Dorsolateral prefrontal cortex (tissue), 120 donors: ENCODE measurements at regions of chr14 and their contacts with region 1.

Region 1: DNA sequence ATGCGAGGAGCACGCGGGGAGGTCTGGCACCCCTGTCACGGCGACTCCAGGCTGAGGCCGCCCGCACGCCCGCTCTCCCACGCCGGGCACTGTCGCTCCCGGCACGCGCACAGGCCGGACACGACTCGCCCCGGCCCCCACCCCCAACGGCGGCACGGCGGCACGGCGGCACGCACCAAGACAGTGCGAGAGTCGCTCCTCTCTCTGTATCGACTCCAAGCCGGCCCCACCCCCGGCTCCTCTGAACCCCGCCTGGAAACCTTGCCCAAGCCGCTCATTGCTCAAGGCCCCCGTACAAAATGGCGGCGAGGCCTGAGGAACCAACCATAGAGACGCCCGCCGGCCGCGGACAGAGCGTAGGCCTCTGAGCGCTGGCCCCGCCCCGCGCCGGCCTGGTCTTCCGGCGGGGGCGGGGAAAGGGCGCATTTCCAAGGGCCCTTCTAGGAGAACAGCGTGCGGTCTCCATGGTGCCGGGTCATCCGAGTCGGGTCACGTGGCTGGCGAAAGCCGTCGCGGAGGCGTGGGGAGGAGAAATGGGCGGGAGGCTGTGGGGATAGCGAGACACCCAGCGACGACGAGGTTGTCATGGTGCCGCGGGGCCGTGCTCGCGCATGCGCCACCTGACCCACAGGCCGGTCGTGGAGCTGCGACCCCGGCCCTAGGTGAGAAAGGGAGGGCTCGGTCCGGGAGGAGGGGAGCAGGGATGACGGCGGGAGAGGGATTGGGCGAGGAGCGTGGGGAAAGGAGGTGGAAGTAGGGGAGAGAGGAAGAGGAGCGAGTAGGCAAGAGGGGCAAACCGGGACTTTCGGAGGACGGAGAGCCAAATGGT is at the start of gene CIPC:
- DNase-seq: peak; percentile 100
- H3K4me3 ChIP-seq: peak within 1 kb of the TSS; percentile 64 to 96 (median 85)
- H3K27ac ChIP-seq: peak within 1 kb of the TSS; percentile 93 to 100 (median 98)
- H3K27me3 ChIP-seq: no peaks in the 10 kb centered on the region
- CTCF ChIP-seq: peak in 37 of 56 donors; percentile 3 to 56 (median 24)
- total RNA-seq, gene CIPC: 63.6 to 149 (median 93.0) TPM

Region 2: DNA sequence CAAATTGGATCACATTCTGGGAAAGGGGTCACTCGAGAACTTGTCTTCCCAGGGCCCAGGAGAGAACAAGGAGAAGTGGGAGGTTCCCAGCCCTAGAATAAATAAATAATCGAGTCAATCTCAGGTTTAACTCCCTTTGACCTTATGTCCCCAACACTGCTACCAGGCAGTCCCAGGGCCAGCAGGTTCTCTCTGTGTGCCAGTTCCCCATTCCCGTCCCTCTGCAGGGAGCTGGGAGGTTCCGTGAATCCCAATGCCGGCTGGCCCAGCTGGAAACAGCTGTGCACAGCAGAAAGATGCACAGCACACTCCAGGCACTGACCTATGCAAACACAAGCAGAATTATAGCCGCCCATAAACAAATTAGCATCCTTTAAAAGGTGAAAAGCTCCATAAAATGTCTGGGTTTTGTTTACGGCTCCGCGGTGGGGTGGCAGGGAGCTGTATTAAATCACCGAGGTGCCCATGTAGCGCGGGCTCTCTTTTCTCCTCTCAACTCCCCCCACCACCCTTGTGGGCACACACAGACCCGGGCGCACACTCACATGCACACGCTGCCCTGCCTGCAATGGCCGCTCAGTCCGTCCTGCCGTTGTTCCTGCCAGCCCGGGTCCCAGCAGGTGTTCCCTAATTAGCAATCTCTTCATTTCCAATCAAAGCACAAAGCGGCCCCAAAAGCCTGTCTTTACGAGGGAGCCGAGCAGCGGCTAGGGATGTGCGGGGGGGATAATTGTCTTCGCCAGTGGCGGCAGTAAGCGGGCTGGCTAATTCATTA is 768.6 kb before region 1 on chr14:
- intact Hi-C with region 1: no loop called
- DNase-seq: peak in 1 of 10 donors; percentile 35
- H3K4me3 ChIP-seq: peak overlapping the region in 47 of 59 donors; percentile 3 to 56 (median 31)
- H3K27ac ChIP-seq: no peak overlapping the region
- H3K27me3 ChIP-seq: peaks cover 0 to 19% (median 5%) of the 10 kb centered on the region in 45 donors
- CTCF ChIP-seq: no peak

Region 3: DNA sequence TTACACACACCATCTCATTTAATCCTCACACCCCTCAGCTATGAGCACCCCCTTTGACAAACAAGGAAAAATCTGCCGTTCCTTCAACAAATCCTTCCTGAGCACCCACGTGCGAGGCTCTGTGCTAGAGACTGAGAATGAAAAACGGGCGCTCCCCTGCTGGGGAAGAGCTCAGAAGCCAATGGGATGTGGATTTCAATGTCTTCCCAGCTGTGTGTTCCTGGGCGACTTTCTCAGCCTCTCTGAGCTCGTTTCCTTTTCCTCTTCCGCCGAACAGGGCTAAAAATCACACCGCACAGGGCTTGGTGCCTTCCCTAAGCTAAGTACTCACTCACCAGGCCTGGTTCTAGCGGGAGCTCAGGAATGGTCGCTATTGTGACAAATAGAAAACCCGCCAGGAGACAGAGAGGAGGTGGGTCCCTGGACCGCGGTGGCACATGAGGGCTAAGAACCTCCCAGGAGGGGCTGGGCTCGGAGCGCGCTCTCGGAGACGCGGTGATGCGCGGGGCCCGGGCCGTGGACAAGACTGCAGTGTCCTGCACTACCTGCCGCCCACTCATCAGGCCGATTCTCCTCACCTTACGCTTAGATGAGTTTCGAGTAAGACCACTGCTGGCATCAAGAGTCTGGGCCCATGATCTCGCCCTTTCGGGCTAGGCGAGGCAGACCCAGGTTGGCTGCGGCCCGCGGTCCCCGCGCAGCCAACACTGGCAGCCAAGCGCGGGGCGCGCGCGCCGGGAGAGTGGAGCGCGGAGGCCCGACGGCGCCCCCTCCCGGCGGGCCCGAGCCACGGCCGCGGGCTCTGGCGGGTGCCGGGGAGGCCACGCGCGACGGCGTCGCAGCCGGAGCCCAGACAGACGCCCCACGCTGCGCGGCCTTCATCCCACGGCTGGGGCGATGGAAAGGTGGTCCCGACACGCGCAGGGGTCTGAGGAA is 26.7 kb after region 1 on chr14:
- intact Hi-C with region 1: loop called (anchors 1 to 2 kb)
- DNase-seq: peak in 9 of 10 donors; percentile 57 to 83 (median 67)
- H3K4me3 ChIP-seq: peak overlapping the region; percentile 46 to 83 (median 62)
- H3K27ac ChIP-seq: peak overlapping the region; percentile 65 to 99 (median 92)
- H3K27me3 ChIP-seq: no peaks in the 10 kb centered on the region
- CTCF ChIP-seq: peak in 52 of 56 donors; percentile 6 to 95 (median 66)

Region 4: DNA sequence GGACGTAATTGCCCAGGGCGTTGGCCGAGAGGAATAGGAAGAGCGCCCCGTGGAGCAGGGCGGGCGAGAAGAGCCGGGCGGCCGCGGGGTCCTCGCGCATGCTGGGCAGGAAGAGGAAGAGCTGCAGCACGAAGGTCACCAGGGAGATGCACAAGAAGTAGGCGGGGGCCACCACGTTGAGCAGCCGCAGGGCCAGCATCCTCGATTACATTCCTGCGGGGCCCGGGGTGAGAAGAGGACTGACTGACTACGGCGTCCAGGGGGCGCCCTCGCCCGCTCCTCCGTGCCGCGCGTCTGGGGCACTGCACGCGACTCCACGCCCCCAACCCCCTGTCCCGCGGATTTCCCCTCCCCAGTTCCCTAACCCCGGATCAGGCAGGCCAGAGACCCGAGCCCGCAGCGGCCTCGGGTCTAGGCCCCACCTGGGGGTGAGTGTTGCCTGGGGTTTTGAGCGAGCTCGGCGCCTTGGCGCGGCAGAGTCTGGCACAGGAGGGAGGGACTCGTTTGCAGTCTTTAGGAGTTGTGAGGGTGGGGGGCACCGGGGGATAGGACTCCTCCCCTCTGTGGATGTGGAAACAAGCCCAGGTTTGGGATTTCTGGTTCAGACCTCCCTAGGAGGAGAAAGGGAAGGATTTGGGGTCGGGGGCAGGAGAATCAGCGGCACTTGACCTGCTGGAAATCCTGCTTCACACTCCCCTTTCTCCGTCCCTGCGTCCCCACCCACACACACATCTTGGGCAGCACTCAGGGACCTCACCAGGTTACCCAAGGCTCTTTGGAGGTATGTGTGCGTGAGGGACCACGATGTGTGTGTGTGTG is 41.8 kb after region 1 on chr14:
- intact Hi-C with region 1: no loop called
- DNase-seq: peak in 8 of 10 donors; percentile 58 to 71 (median 64)
- H3K4me3 ChIP-seq: peak overlapping the region; percentile 42 to 80 (median 68)
- H3K27ac ChIP-seq: peak overlapping the region in 54 of 59 donors; percentile 12 to 93 (median 85)
- H3K27me3 ChIP-seq: peaks cover 0 to 12% (median 0%) of the 10 kb centered on the region in 45 donors
- CTCF ChIP-seq: peak in 54 of 56 donors; percentile 41 to 81 (median 62)

Region 5: GRCh38 chr14:77170045-77170444 is 72.1 kb after region 1 on chr14:
- intact Hi-C with region 1: no loop called
- DNase-seq: no peak
- H3K4me3 ChIP-seq: no peak overlapping the region
- H3K27ac ChIP-seq: no peak overlapping the region
- H3K27me3 ChIP-seq: no peaks in the 10 kb centered on the region
- CTCF ChIP-seq: no peak

Region 6: GRCh38 chr14:77306851-77307765 is 209.2 kb after region 1 on chr14:
- intact Hi-C with region 1: loop called in 1 of 2 experiments (anchors 5 kb)
- DNase-seq: peak in 8 of 10 donors; percentile 69 to 82 (median 76)
- H3K4me3 ChIP-seq: peak overlapping the region in 43 of 59 donors; percentile 2 to 56 (median 25)
- H3K27ac ChIP-seq: peak overlapping the region; percentile 92 to 100 (median 99)
- H3K27me3 ChIP-seq: no peaks in the 10 kb centered on the region
- CTCF ChIP-seq: no peak